ENCODE measurements at regions of chr7 and their contacts with region 1.

Region 1: GRCh38 chr7:132966754-132967469 is 115.0 kb downstream of the CHCHD3 start:
- DNase-seq: no peak
- ATAC-seq: no peak
- H3K4me3 ChIP-seq: no peak overlapping the region
- H3K4me3 Mint-ChIP-seq: no peak overlapping the region
- H3K27ac ChIP-seq: no peak overlapping the region
- H3K27ac Mint-ChIP-seq: no peak overlapping the region
- H3K4me1 ChIP-seq: no peaks in the 10 kb centered on the region
- H3K4me1 Mint-ChIP-seq: peaks cover 2 to 11% (median 6%) of the 10 kb centered on the region in 3 donors
- H3K27me3 ChIP-seq: no peaks in the 10 kb centered on the region
- H3K27me3 Mint-ChIP-seq: no peaks in the 10 kb centered on the region

Region 2: GRCh38 chr7:133310232-133310862 is 343.4 kb after region 1 on chr7:
- CTCF ChIA-PET with region 1: no interaction called
- POLR2A ChIA-PET with region 1: interaction called in 1 of 2 experiments, 10 read pairs
- DNase-seq: no peak
- ATAC-seq: no peak
- H3K4me3 ChIP-seq: no peak overlapping the region
- H3K4me3 Mint-ChIP-seq: no peak overlapping the region
- H3K27ac ChIP-seq: no peak overlapping the region
- H3K27ac Mint-ChIP-seq: no peak overlapping the region
- H3K4me1 ChIP-seq: peaks cover 0 to 4% of the 10 kb centered on the region in 2 experiments
- H3K4me1 Mint-ChIP-seq: peaks cover 0 to 21% (median 14%) of the 10 kb centered on the region in 3 donors
- H3K27me3 ChIP-seq: no peaks in the 10 kb centered on the region
- H3K27me3 Mint-ChIP-seq: no peaks in the 10 kb centered on the region

Region 3: DNA sequence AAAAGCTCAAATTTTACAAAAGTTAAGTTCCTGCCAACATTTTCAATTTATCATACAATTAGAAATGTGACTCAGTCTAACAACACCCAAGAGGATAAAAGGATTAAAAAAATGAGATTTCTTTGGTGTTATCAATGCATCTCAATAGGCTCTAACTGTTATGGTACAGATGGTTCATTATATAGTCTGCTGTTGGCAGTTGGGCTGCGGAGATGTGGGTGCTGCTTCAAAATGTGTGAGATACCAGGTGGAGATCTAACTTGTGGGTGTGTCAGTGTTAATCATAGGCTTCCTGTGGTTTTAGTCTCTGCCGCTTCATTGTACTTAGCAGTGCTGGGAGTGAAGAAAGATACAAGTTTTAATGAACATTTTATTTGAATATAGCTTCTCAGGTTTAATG is 517.2 kb after region 1 on chr7:
- CTCF ChIA-PET with region 1: no interaction called
- POLR2A ChIA-PET with region 1: interaction called in 1 of 2 experiments, 14 read pairs
- DNase-seq: peak in 32 of 35 experiments; percentile 2 to 63 (median 27)
- ATAC-seq: peak; percentile 80 to 97 (median 94)
- H3K4me3 ChIP-seq: peak overlapping the region; percentile 14 to 66
- H3K4me3 Mint-ChIP-seq: peak overlapping the region; percentile 29 to 53 (median 41)
- H3K27ac ChIP-seq: peak overlapping the region; percentile 40
- H3K27ac Mint-ChIP-seq: peak overlapping the region; percentile 41 to 50
- H3K4me1 ChIP-seq: peaks cover 33 to 37% of the 10 kb centered on the region in 2 experiments
- H3K4me1 Mint-ChIP-seq: peaks cover 39 to 51% (median 43%) of the 10 kb centered on the region in 3 donors
- H3K27me3 ChIP-seq: no peaks in the 10 kb centered on the region
- H3K27me3 Mint-ChIP-seq: no peaks in the 10 kb centered on the region

Measured in T-cell (primary cell).